B cell (primary cell): ENCODE measurements at regions of chr14 and their contacts with region 1.

Region 1: DNA sequence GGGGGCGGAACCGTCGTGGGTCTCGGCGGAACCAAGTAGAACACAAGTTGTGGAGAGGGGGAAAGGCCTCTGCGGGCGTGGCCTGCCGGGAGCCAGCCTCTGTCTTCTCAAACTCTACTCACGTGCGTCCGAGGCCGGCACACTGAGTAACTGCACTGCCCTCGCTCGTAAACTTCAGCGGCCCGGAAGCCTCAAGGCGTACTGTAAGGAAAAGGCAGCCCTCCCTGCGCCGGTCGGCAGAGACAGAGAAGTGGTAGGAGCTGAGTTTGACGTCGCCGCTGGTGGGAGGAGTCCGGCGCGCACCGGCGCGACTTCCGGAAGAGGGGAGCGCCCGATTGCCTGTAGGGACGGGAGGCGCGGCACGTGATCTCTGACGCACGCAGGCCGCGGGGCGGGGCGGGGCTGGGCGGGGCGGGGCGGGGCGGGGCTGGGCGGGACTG is at the start of gene FBXO33:
- DNase-seq: peak; percentile 99
- ATAC-seq: peak; percentile 75
- H3K4me3 ChIP-seq: peak within 1 kb of the TSS; percentile 85 to 95 (median 92)
- H3K4me3 Mint-ChIP-seq: peak within 1 kb of the TSS; percentile 99
- H3K27ac ChIP-seq: peak within 1 kb of the TSS; percentile 100
- H3K27ac Mint-ChIP-seq: peak within 1 kb of the TSS; percentile 100
- H3K4me1 ChIP-seq: peaks cover 24 to 30% of the 10 kb centered on the region in 2 donors
- H3K4me1 Mint-ChIP-seq: peaks cover 39% of the 10 kb centered on the region
- H3K27me3 ChIP-seq: no peaks in the 10 kb centered on the region
- H3K27me3 Mint-ChIP-seq: no peaks in the 10 kb centered on the region
- CTCF ChIP-seq: no peak
- total RNA-seq, gene FBXO33: 17.3 and 18.1 TPM in 2 replicates

Region 2: DNA sequence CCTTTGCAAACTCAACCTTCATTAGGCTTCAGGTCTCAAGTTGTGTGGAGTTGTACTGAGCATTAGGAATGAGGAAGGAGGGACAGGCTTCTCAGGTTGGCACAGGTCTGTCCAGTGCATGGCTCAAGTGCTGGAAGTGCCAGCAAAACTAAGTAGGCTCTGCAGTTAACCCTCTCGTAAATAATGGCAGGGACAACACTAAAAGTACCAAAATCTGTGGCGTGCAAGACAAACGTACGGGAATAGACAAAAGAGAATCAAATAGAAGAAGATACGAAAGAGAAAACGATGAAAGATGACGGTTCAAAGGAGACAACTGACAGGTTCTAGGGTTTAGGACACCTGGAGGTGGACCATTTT is 262.7 kb before region 1 on chr14:
- CTCF ChIA-PET with region 1: interaction called, 4 read pairs
- POLR2A ChIA-PET with region 1: interaction called, 27 read pairs
- intact Hi-C with region 1: loop called (anchors 1 kb)
- DNase-seq: no peak
- ATAC-seq: no peak
- H3K4me3 ChIP-seq: peak overlapping the region; percentile 67 to 95 (median 81)
- H3K4me3 Mint-ChIP-seq: peak overlapping the region; percentile 95
- H3K27ac ChIP-seq: peak overlapping the region; percentile 87 to 92
- H3K27ac Mint-ChIP-seq: peak overlapping the region; percentile 99
- H3K4me1 ChIP-seq: peaks cover 19 to 29% of the 10 kb centered on the region in 2 donors
- H3K4me1 Mint-ChIP-seq: peaks cover 37% of the 10 kb centered on the region
- H3K27me3 ChIP-seq: no peaks in the 10 kb centered on the region
- H3K27me3 Mint-ChIP-seq: no peaks in the 10 kb centered on the region
- CTCF ChIP-seq: no peak

Region 3: DNA sequence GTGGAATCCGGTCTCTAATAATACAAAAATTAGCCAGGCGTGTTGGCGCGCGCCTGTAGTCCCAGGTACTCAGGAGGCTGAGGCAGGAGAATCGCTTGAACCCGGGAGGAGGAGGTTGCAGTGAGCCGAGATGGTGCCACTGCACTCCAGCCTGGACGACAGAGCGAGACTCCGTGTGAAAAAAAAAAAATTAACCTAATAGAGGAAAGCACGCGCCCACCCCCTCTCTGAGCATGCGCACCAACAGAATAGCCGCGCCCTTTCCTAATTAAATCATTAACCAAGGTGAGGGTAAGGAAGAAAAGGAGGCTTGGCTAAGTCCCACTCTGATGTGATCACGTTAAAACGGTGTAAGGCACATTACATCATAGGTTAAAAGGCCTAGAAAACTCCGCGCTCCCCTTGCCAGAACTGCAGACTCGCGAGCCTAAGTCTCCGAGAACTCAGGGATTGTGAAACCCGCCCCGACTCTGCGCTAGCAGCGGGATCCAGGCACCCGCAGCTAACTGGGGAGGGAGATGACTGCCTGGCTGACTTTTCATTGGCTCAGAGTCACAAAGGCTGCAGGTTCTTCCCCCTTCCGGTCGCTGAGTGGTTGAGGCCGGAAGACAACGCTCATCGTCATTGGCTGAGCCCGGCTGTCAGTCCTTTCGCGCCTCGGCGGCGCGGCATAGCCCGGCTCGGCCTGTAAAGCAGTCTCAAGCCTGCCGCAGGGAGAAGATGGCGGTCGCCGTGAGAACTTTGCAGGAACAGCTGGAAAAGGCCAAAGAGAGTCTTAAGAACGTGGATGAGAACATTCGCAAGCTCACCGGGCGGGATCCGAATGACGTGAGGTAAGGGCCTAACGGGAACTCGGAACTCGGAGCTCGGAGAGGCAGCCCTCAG is 257.4 kb before region 1 on chr14 and contains the start of gene PNN:
- CTCF ChIA-PET with region 1: interaction called, 4 read pairs
- POLR2A ChIA-PET with region 1: interaction called, 27 read pairs
- intact Hi-C with region 1: loop called (anchors 1 kb)
- DNase-seq: peak; percentile 99
- ATAC-seq: peak; percentile 82
- H3K4me3 ChIP-seq: peak within 1 kb of the TSS; percentile 80 to 97 (median 85)
- H3K4me3 Mint-ChIP-seq: peak within 1 kb of the TSS; percentile 97
- H3K27ac ChIP-seq: peak within 1 kb of the TSS; percentile 92 to 95
- H3K27ac Mint-ChIP-seq: peak within 1 kb of the TSS; percentile 99
- H3K4me1 ChIP-seq: peaks cover 15 to 24% of the 10 kb centered on the region in 2 donors
- H3K4me1 Mint-ChIP-seq: peaks cover 35% of the 10 kb centered on the region
- H3K27me3 ChIP-seq: no peaks in the 10 kb centered on the region
- H3K27me3 Mint-ChIP-seq: no peaks in the 10 kb centered on the region
- CTCF ChIP-seq: no peak
- total RNA-seq, gene PNN: 131 and 134 TPM in 2 replicates

Region 4: DNA sequence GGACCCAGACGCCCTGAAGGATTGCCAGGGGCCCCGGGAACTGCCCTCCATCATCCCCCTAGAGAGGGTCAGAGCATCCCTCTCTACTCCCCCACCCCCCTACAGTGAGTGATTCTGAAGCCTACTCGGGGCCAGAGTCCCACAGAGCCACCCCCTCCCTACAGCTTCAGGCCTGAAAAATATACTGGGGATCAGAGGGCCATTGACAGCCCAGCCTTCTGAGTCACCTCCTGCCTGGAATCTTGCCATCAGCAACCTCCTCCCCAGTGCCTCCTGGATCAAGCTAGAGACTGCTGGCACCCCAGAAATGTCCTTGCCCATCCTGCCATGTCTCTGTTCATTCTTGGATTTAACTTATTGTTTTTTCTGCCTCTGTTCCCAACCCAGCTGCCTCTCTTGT is 220.2 kb before region 1 on chr14:
- CTCF ChIA-PET with region 1: no interaction called
- POLR2A ChIA-PET with region 1: no interaction called
- intact Hi-C with region 1: no loop called
- DNase-seq: no peak
- ATAC-seq: no peak
- H3K4me3 ChIP-seq: no peak overlapping the region
- H3K4me3 Mint-ChIP-seq: no peak overlapping the region
- H3K27ac ChIP-seq: no peak overlapping the region
- H3K27ac Mint-ChIP-seq: no peak overlapping the region
- H3K4me1 ChIP-seq: no peaks in the 10 kb centered on the region
- H3K4me1 Mint-ChIP-seq: no peaks in the 10 kb centered on the region
- H3K27me3 ChIP-seq: no peaks in the 10 kb centered on the region
- H3K27me3 Mint-ChIP-seq: no peaks in the 10 kb centered on the region
- CTCF ChIP-seq: no peak

Region 5: GRCh38 chr14:39395555-39396254 is 36.5 kb before region 1 on chr14:
- CTCF ChIA-PET with region 1: no interaction called
- POLR2A ChIA-PET with region 1: no interaction called
- intact Hi-C with region 1: loop called (anchors 5 kb)
- DNase-seq: no peak
- ATAC-seq: no peak
- H3K4me3 ChIP-seq: no peak overlapping the region
- H3K4me3 Mint-ChIP-seq: no peak overlapping the region
- H3K27ac ChIP-seq: no peak overlapping the region
- H3K27ac Mint-ChIP-seq: no peak overlapping the region
- H3K4me1 ChIP-seq: no peaks in the 10 kb centered on the region
- H3K4me1 Mint-ChIP-seq: no peaks in the 10 kb centered on the region
- H3K27me3 ChIP-seq: no peaks in the 10 kb centered on the region
- H3K27me3 Mint-ChIP-seq: no peaks in the 10 kb centered on the region
- CTCF ChIP-seq: no peak